Mammary epithelial cell (primary cell): ENCODE measurements at regions of chr4 and their contacts with region 1.

Region 1: GRCh38 chr4:142984871-142985585 is 138.9 kb upstream of the INPP4B start:
- DNase-seq: peak; percentile 16
- H3K4me3 ChIP-seq: no peak overlapping the region
- H3K27ac ChIP-seq: no peak overlapping the region
- H3K4me1 ChIP-seq: no peaks in the 10 kb centered on the region
- H3K27me3 ChIP-seq: peaks cover 11% of the 10 kb centered on the region
- CTCF ChIP-seq: peak; percentile 44 to 59

Region 2: GRCh38 chr4:143035661-143036060 is 50.6 kb after region 1 on chr4:
- CTCF ChIA-PET with region 1: no interaction called
- dilution Hi-C with region 1: no loop called
- in situ Hi-C with region 1: no loop called
- intact Hi-C with region 1: no loop called
- DNase-seq: no peak
- H3K4me3 ChIP-seq: no peak overlapping the region
- H3K27ac ChIP-seq: no peak overlapping the region
- H3K4me1 ChIP-seq: no peaks in the 10 kb centered on the region
- H3K27me3 ChIP-seq: peaks cover 2% of the 10 kb centered on the region
- CTCF ChIP-seq: no peak

Region 3: DNA sequence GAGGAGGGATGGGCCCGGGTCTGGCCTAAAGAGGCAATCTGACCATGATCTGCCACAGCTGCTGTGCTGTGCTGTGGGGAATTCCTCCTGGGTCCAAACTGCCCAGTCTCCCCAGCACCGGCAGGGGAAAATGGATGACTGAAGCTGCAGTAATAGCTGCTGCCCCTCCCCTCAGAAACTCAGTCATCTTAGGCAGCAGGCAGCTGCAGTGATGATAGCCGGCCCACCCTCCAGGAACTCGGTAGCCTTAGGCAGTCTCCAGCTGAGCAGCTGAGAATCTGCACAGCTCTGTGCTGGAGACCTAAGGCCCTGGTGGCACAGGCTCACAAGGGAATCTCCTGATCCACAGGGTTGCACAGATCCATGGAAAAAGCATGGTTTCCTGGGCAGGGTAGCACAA is 86.3 kb after region 1 on chr4:
- CTCF ChIA-PET with region 1: no interaction called
- dilution Hi-C with region 1: no loop called
- in situ Hi-C with region 1: no loop called
- intact Hi-C with region 1: no loop called
- DNase-seq: no peak
- H3K4me3 ChIP-seq: no peak overlapping the region
- H3K27ac ChIP-seq: no peak overlapping the region
- H3K4me1 ChIP-seq: no peaks in the 10 kb centered on the region
- H3K27me3 ChIP-seq: no peaks in the 10 kb centered on the region
- CTCF ChIP-seq: no peak

Region 4: DNA sequence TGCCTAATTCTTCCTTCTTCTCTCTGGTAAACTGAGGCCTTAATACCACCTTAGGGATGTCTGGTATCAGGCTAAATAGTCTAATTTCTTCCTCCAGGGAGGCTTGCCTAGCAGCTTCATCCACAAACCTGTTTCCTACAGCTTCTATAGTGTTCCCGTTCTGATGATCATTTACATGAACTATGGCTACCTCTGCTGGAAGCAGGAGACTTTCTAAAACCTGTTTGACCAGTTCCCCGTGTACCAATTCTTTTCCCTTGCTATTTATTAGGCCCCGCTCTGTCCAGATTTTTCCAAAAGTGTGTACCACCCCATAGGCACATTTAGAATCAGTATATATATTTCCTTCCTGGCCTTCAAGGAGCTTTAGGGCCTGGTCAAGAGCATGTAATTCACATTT is 193.9 kb after region 1 on chr4:
- CTCF ChIA-PET with region 1: no interaction called
- dilution Hi-C with region 1: no loop called
- in situ Hi-C with region 1: no loop called
- intact Hi-C with region 1: loop called (anchors 2 kb)
- DNase-seq: peak; percentile 19
- H3K4me3 ChIP-seq: no peak overlapping the region
- H3K27ac ChIP-seq: no peak overlapping the region
- H3K4me1 ChIP-seq: peaks cover 5% of the 10 kb centered on the region
- H3K27me3 ChIP-seq: no peaks in the 10 kb centered on the region
- CTCF ChIP-seq: peak in 1 of 2 donors; percentile 15

Region 5: GRCh38 chr4:143184217-143185116 is 199.4 kb after region 1 on chr4 and contains the start of gene USP38:
- CTCF ChIA-PET with region 1: no interaction called
- dilution Hi-C with region 1: no loop called
- in situ Hi-C with region 1: no loop called
- intact Hi-C with region 1: loop called (anchors 2 kb)
- DNase-seq: peak; percentile 95
- H3K4me3 ChIP-seq: peak within 1 kb of the TSS; percentile 70 to 98 (median 71)
- H3K27ac ChIP-seq: peak within 1 kb of the TSS; percentile 84
- H3K4me1 ChIP-seq: peaks cover 9% of the 10 kb centered on the region
- H3K27me3 ChIP-seq: no peaks in the 10 kb centered on the region
- CTCF ChIP-seq: no peak
- total RNA-seq, gene USP38: 18.3 to 37.5 TPM